Activated T-helper 1 cell treated with anti-CD3 and anti-CD28 coated beads, Interleukin-12 subunit alpha, Interleukin-12 subunit beta, Interleukin-2, Interleukin-4 antibody, amounts not matched to agents 30 ng/mL and 10 ng/mL and 1 ng/mL, durations not matched to agents 14 hours and 24 hours and 36 hours (primary cell): ENCODE measurements at regions of chr5 and their contacts with region 1.

Region 1: DNA sequence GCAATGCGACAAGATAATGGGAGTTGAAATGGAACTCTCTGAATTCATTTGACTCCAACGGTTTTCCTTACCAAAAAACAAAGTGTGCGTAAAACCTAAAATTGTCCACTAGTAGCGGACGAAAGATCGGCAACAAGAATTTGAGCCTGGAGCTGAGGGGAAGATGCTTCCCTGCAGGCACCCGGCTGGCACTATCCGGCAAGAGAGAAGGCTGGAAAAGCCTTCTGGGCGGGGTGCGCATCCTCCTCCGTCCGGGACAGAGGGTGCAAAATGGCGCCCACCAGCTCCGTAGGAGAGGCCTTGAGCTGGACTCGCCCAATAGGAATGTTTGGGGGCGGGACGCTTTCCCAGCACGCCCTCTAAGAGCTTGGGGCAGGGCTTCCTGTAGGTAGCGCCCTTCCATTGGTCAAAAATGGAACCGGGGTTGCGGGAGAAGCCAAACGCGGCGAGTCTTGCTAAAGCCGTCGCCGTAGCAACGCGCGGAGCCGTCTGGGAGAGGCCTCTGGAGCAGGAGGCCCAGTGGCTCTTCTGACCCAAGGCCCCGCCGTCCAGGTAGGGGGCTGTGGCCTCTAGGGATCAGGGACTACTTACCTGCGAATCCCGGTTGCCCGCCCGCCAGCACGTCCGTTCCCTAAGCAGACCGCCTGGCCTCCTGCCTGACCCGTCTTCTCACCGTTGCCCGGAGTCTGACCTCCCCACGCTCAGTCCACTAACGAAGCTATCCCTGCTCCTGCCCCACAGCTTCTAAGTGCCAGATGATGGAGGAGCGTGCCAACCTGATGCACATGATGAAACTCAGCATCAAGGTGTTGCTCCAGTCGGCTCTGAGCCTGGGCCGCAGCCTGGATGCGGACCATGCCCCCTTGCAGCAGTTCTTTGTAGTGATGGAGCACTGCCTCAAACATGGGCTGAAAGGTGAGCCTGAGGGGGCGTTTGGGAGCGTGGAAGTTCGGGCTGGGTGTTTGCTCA is 9.2 kb downstream of the RUFY1 start:
- DNase-seq: peak; percentile 93
- H3K4me3 Mint-ChIP-seq: peak overlapping the region; percentile 94
- H3K27ac Mint-ChIP-seq: peak overlapping the region; percentile 86
- H3K4me1 Mint-ChIP-seq: peaks cover 10% of the 10 kb centered on the region
- H3K27me3 Mint-ChIP-seq: no peaks in the 10 kb centered on the region

Region 2: GRCh38 chr5:179355976-179356974 is 203.3 kb before region 1 on chr5:
- intact Hi-C with region 1: no loop called
- DNase-seq: no peak
- H3K4me3 Mint-ChIP-seq: no peak overlapping the region
- H3K27ac Mint-ChIP-seq: no peak overlapping the region
- H3K4me1 Mint-ChIP-seq: no peaks in the 10 kb centered on the region
- H3K27me3 Mint-ChIP-seq: no peaks in the 10 kb centered on the region

Region 3: DNA sequence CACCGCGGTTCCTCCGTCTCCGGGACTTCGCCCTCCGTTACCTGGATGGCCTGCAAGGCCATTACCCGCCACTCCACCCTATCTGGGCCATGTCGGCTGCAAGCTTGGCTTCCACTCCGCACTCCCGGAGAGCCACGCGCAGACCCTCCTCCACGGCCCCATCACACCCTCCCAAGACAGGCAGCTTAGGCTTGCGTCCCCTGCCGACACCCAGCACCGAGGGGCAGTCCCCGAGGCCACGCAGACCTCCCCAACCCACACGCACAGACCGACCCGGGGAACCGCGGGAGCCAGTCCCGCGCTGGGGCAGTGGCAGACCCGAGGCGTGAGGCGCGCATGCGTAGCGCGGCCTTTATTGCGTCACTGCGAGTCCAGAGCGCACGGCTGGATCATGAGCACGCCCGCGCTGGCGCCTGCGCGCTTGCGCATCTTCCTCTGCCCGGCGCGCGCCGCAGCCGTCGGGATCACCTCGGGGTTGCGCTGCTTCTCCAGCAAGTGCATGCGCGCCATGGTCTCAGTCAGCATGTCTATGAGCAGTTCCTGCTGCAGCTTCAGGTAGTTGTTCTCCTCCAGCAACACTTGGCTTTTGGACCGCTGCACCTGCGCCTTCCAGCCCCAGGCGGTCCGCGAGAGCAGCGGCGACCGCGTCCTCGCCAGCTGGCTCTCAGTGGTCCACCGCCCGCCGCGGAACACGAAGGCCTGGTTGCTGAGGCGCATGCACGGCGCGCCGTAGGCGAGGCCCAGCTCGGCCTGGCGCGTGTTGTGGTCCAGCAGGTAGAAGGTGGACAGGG is 118.8 kb after region 1 on chr5:
- intact Hi-C with region 1: loop called (anchors 2 kb)
- DNase-seq: peak; percentile 93
- H3K4me3 Mint-ChIP-seq: peak overlapping the region; percentile 99
- H3K27ac Mint-ChIP-seq: peak overlapping the region; percentile 98
- H3K4me1 Mint-ChIP-seq: peaks cover 21% of the 10 kb centered on the region
- H3K27me3 Mint-ChIP-seq: no peaks in the 10 kb centered on the region